CD8-positive, alpha-beta T cell (primary cell): ENCODE measurements at regions of chr9 and their contacts with region 1.

Region 1: GRCh38 chr9:10843151-10843550 is 230.3 kb upstream of the PTPRD start:
- DNase-seq: no peak
- ATAC-seq: no peak
- H3K4me3 ChIP-seq: no peak overlapping the region
- H3K4me3 Mint-ChIP-seq: no peak overlapping the region
- H3K27ac ChIP-seq: no peak overlapping the region
- H3K27ac Mint-ChIP-seq: no peak overlapping the region
- H3K4me1 ChIP-seq: no peaks in the 10 kb centered on the region
- H3K4me1 Mint-ChIP-seq: no peaks in the 10 kb centered on the region
- H3K27me3 ChIP-seq: no peaks in the 10 kb centered on the region
- H3K27me3 Mint-ChIP-seq: no peaks in the 10 kb centered on the region
- CTCF ChIP-seq: no peak

Region 2: DNA sequence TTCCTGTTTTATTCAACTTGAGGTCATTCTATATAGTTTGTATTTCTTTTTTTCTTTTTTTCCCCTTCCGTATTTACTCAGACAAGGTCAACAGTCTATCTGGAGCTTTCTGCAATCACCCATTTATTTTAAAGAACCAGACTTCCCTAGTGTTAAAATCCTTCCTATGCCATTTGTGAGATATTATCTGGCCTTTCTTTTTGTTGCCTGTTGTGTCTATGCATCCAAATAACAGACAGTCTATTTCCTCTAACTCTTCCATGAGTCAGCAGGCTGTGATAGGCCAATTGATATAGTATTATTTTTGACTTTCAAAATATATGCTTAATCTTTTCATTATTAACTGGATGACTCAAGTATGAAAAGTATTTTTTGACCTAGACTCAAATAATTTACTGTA is 60.8 kb after region 1 on chr9:
- CTCF ChIA-PET with region 1: no interaction called
- POLR2A ChIA-PET with region 1: no interaction called
- intact Hi-C with region 1: loop called in 1 of 2 experiments (anchors 10 kb)
- DNase-seq: no peak
- ATAC-seq: no peak
- H3K4me3 ChIP-seq: no peak overlapping the region
- H3K4me3 Mint-ChIP-seq: no peak overlapping the region
- H3K27ac ChIP-seq: no peak overlapping the region
- H3K27ac Mint-ChIP-seq: no peak overlapping the region
- H3K4me1 ChIP-seq: no peaks in the 10 kb centered on the region
- H3K4me1 Mint-ChIP-seq: no peaks in the 10 kb centered on the region
- H3K27me3 ChIP-seq: no peaks in the 10 kb centered on the region
- H3K27me3 Mint-ChIP-seq: no peaks in the 10 kb centered on the region
- CTCF ChIP-seq: no peak